ENCODE measurements at regions of chr7 and their contacts with region 1.

Region 1: GRCh38 chr7:23531794-23532489 is at the start of gene TRA2A:
- DNase-seq: peak; percentile 99
- H3K4me3 Mint-ChIP-seq: peak within 1 kb of the TSS; percentile 99
- H3K27ac Mint-ChIP-seq: peak within 1 kb of the TSS; percentile 100
- H3K4me1 Mint-ChIP-seq: peaks cover 43% of the 10 kb centered on the region
- H3K27me3 Mint-ChIP-seq: no peaks in the 10 kb centered on the region
- total RNA-seq, gene TRA2A: 77.8 to 79.0 TPM

Region 2: GRCh38 chr7:23490357-23491135 is 41.4 kb before region 1 on chr7:
- CTCF ChIA-PET with region 1: no interaction called
- intact Hi-C with region 1: loop called (anchors 1 kb)
- DNase-seq: peak; percentile 69
- H3K4me3 Mint-ChIP-seq: peak overlapping the region; percentile 81
- H3K27ac Mint-ChIP-seq: peak overlapping the region; percentile 81
- H3K4me1 Mint-ChIP-seq: peaks cover 2% of the 10 kb centered on the region
- H3K27me3 Mint-ChIP-seq: no peaks in the 10 kb centered on the region

Region 3: GRCh38 chr7:23622506-23622925 is 90.6 kb after region 1 on chr7:
- CTCF ChIA-PET with region 1: no interaction called
- intact Hi-C with region 1: no loop called
- DNase-seq: no peak
- H3K4me3 Mint-ChIP-seq: no peak overlapping the region
- H3K27ac Mint-ChIP-seq: no peak overlapping the region
- H3K4me1 Mint-ChIP-seq: peaks cover 3% of the 10 kb centered on the region
- H3K27me3 Mint-ChIP-seq: no peaks in the 10 kb centered on the region

Measured in activated naive CD4-positive, alpha-beta T cell treated with anti-CD3 and anti-CD28 coated beads for 36 hours (primary cell).